Stomach (tissue), 19 donors: ENCODE measurements at regions of chr6 and their contacts with region 1.

Region 1: GRCh38 chr6:106339334-106340029 is 13.9 kb upstream of the ATG5 start:
- DNase-seq: peak; percentile 54 to 81
- H3K4me3 ChIP-seq: no peak overlapping the region
- H3K27ac ChIP-seq: no peak overlapping the region
- H3K4me1 ChIP-seq: peaks cover 0 to 8% (median 0%) of the 10 kb centered on the region in 4 donors
- H3K27me3 ChIP-seq: no peaks in the 10 kb centered on the region
- CTCF ChIP-seq: peak in 5 of 7 experiments; percentile 45 to 69 (median 66)
- EP300 ChIP-seq: no peak
- POLR2A ChIP-seq: no peak

Region 2: DNA sequence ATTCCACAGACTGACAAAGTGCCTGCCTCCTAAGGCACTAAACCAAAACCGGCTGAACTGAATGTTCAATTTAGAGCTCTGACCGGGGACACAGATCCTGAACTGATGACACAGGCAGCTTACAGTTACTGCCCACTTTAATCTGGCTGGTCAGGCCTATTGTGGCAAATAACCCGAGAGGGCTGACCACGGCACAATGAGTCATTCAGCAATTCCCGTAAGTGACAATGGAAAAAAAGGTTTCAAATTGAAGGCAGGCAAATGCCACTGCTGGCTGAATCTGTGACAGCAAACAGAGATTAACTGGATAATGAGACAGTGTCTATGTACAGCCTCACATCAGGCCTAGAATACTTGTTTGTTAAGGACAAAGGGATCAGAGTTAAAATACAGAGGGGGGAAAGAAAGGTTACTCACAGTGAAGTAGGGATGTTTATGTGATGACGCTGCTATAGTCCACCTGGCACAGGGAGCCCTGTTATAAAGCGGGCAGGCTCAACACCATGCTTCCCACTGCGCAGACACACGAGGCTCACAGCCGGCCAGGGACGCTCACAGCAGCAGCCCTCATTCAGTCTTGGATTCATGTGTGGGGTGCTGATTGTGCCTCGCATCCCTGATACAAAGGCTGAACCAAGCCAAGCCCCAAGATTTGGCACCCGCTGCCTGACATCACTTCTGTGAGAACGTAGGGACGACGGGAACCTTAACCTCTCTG is 235.4 kb after region 1 on chr6:
- intact Hi-C with region 1: loop called (anchors 10 kb)
- DNase-seq: no peak
- H3K4me3 ChIP-seq: no peak overlapping the region
- H3K27ac ChIP-seq: no peak overlapping the region
- H3K4me1 ChIP-seq: no peaks in the 10 kb centered on the region
- H3K27me3 ChIP-seq: no peaks in the 10 kb centered on the region
- CTCF ChIP-seq: no peak
- EP300 ChIP-seq: no peak
- POLR2A ChIP-seq: no peak

Region 3: DNA sequence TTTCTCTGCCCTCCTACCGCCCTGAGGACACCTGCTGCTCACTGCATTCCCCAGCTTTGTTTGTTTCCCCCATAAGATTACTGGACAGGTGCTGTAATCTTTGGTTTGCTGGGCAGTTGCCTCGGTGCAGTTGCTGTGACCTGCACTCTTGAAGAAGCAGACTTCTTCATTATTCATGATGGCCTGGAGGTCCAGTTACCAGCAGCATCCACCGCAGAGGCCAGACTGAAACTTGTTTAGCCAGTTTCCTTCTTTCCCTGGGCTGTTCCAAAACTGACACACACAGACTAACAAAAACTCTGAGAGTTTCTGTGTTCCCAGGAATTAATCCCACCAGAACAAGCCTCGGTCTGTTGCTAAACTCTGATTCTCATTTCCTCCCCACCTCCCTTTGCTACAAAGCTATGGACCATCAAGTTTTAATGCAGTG is 434.0 kb after region 1 on chr6:
- intact Hi-C with region 1: no loop called
- DNase-seq: peak; percentile 57 to 74
- H3K4me3 ChIP-seq: no peak overlapping the region
- H3K27ac ChIP-seq: peak overlapping the region; percentile 46 to 66 (median 53)
- H3K4me1 ChIP-seq: peaks cover 8 to 18% (median 12%) of the 10 kb centered on the region in 4 donors
- H3K27me3 ChIP-seq: peaks cover 0 to under 1% (median 0%) of the 10 kb centered on the region in 3 donors
- CTCF ChIP-seq: no peak
- EP300 ChIP-seq: no peak
- POLR2A ChIP-seq: no peak